Upper lobe of right lung (tissue), 1 donor: ENCODE measurements at regions of chr14 and their contacts with region 1.

Region 1: DNA sequence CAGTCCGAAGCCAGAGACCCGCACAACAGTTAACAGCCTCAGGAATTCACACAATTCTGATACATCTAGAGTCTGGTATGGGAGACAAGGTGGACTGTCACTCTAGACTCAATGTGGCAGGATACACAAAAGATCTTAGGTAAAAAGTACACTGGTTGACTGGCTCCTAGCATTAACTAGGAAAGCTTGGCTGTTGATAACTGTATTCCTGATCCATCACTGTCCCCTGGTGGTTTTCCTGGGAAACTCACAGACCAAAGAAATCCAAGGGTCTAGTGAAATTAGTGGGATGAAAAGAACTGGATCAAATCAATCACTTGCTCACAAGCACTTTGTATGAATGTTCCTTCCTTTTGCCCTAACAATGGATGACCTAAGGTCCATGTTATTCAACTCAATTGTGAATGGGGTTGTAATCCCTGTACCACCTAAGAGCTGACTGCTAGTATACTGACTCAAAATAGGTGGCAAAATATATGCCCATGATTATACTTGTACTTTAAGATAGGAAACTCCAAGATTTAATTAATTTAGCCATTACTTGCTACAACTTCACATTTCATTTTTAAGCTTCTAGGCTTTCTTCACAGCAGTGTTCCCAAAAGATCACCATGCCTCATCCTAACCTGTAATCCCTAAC is 14.0 kb downstream of the NPC2 start:
- DNase-seq: no peak
- ATAC-seq: peak; percentile 29
- H3K4me3 ChIP-seq: no peak overlapping the region
- H3K27ac ChIP-seq: no peak overlapping the region
- H3K4me1 ChIP-seq: no peaks in the 10 kb centered on the region
- H3K27me3 ChIP-seq: no peaks in the 10 kb centered on the region
- CTCF ChIP-seq: peak; percentile 56

Region 2: DNA sequence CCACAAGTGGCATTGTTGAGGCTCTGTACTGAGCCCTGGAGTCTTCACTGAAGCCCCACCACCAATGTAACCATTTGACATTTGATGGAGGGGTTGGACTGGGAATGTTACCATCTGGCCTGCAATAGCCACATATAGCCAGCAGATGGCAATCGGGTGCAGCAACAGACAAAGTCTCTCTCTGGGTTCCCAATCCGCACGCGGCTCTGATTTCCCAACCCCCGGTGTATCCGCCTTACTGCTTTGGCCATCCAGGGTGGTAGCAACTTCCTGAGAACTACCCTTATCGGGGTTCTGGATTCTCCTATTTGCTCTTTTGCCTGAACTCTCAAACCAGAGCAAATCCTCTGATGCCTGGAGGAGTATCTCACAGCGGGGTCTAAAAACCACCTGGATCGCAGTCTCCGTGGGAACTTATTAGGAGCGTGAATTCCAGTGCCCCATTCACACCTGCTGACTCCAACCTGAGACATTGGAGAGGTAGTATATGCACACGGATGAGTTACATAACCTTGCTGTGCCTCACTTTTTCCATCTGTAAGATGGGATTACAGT is 116.7 kb before region 1 on chr14:
- intact Hi-C with region 1: loop called (anchors 5 kb)
- DNase-seq: peak; percentile 90
- ATAC-seq: peak; percentile 97
- H3K4me3 ChIP-seq: no peak overlapping the region
- H3K27ac ChIP-seq: no peak overlapping the region
- H3K4me1 ChIP-seq: no peaks in the 10 kb centered on the region
- H3K27me3 ChIP-seq: no peaks in the 10 kb centered on the region
- CTCF ChIP-seq: peak; percentile 94